Activated CD4-positive, alpha-beta T cell treated with anti-CD3 and anti-CD28 coated beads for 36 hours (primary cell): ENCODE measurements at regions of chr1 and their contacts with region 1.

Region 1: GRCh38 chr1:111507411-111508201 is 4.2 kb upstream of the ADORA3 start:
- DNase-seq: peak; percentile 77
- ATAC-seq: peak; percentile 67
- H3K4me3 Mint-ChIP-seq: peak overlapping the region; percentile 50
- H3K27ac Mint-ChIP-seq: peak overlapping the region; percentile 93
- H3K4me1 Mint-ChIP-seq: peaks cover 59% of the 10 kb centered on the region
- H3K27me3 Mint-ChIP-seq: no peaks in the 10 kb centered on the region

Region 2: DNA sequence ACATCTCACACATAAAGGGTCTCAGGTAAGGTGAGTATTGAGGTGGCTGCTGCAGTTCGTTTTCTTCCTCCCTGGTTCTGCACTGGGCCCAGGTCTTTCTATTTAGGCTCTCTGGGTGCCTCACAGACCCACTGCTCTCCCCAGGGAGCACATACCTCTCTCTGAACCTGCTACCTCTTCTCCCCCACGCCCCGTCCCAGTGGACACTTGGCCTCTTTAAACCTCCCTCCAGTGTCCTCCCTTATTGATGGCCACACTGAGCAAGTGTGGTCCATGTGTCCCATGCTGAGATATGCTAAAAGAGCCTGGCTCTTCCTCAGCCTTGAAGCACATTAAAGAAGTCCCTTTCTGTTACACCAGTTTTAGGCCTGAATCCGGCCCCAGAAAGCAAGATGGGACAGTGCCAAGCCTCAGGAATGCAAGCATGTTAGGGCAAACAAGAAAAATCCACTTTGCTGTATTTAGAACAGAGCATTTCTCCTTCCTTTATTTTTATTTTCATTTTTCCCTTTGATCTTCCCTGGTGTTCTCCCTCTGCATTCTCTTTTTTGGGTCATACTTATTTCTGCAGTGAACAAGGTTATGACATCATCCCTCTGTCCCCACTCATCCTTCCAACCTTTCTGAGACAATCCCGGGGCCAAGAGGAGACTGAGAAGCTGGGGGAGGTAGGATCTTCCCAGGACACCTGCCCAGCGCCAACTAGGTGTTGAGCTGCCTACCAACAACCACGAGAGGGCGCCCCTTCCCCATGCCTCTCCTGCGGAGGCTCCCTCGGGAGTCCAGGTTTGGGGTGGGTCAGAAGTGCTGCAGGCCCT is 285.1 kb before region 1 on chr1:
- CTCF ChIA-PET with region 1: interaction called, 3 read pairs
- POLR2A ChIA-PET with region 1: interaction called, 3 read pairs
- intact Hi-C with region 1: loop called in 1 of 2 experiments (anchors 5 kb)
- DNase-seq: peak; percentile 91
- ATAC-seq: peak; percentile 24
- H3K4me3 Mint-ChIP-seq: peak overlapping the region; percentile 62
- H3K27ac Mint-ChIP-seq: peak overlapping the region; percentile 88
- H3K4me1 Mint-ChIP-seq: peaks cover 93% of the 10 kb centered on the region
- H3K27me3 Mint-ChIP-seq: no peaks in the 10 kb centered on the region

Region 3: GRCh38 chr1:111436726-111437125 is 70.9 kb before region 1 on chr1:
- CTCF ChIA-PET with region 1: no interaction called
- POLR2A ChIA-PET with region 1: no interaction called
- intact Hi-C with region 1: no loop called
- DNase-seq: no peak
- ATAC-seq: no peak
- H3K4me3 Mint-ChIP-seq: no peak overlapping the region
- H3K27ac Mint-ChIP-seq: no peak overlapping the region
- H3K4me1 Mint-ChIP-seq: peaks cover 4% of the 10 kb centered on the region
- H3K27me3 Mint-ChIP-seq: no peaks in the 10 kb centered on the region

Region 4: DNA sequence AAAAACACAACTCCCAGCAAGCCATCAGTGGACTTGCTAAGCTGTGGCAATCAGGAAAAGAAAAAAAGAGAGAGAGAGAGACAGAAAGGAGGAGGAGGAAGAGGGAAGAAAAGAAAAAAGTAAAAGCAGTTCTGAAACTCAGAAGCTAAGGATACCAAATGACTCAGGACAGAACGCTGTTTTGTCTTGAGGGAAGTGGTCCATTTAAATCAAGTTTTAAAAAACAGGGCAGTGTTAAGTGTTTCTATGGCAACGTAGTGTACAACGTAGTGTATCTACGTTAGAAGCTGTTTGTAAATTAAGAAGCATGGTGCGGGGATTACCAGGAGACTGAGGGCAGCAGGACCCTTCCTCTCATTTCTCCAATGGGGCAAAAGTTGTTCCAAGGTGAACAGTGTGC is 10.0 kb before region 1 on chr1:
- CTCF ChIA-PET with region 1: interaction called, 72 read pairs
- POLR2A ChIA-PET with region 1: interaction called, 7 read pairs
- intact Hi-C with region 1: no loop called
- DNase-seq: no peak
- ATAC-seq: peak; percentile 52
- H3K4me3 Mint-ChIP-seq: no peak overlapping the region
- H3K27ac Mint-ChIP-seq: peak overlapping the region; percentile 66
- H3K4me1 Mint-ChIP-seq: peaks cover 34% of the 10 kb centered on the region
- H3K27me3 Mint-ChIP-seq: no peaks in the 10 kb centered on the region

Region 5: DNA sequence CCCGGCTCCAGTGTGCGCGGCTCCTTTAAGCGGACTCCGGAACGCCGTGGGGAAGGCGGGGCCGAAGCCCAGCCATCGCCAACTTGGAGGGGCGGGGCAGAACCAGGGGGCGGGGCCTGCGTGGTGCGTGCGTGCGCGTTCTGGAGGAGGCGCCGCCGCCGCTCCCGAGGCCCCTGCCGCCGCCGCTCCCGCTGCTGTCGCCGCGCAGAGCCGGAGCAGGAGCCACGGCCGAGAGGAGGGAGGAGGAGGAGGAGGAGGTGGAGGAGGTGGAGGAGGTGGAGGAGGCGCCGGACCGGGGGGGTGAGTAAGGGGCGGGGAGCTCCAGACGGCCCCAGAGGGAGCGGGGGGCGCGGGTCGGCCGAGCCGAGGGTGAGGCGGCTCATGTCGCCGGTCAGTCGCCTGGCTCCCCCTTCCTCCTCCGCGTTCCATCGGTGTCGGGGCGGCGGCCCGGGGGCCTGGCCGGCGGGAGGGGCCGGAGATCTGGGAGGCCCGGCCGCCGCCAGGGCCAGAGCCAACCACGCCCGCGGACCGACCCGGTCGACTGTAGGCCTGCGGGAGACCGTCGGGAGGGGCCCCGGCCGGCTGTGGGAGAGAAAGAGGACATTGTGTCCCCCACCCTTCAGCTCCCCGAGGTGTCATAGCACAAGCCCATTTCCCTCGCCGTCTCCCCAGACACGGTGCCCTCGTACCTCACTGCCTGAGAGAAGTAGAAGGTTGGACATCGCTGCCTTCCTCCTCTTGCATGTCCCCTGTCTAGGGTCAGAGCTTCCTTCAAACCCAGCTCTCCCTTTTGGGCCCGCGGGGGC is 112.2 kb after region 1 on chr1 and contains the start of gene RAP1A:
- CTCF ChIA-PET with region 1: interaction called, 49 read pairs
- POLR2A ChIA-PET with region 1: interaction called, 11 read pairs
- intact Hi-C with region 1: loop called in 1 of 2 experiments (anchors 1 kb)
- DNase-seq: peak; percentile 98
- ATAC-seq: peak; percentile 71
- H3K4me3 Mint-ChIP-seq: peak within 1 kb of the TSS; percentile 96
- H3K27ac Mint-ChIP-seq: peak within 1 kb of the TSS; percentile 97
- H3K4me1 Mint-ChIP-seq: peaks cover 72% of the 10 kb centered on the region
- H3K27me3 Mint-ChIP-seq: no peaks in the 10 kb centered on the region
- total RNA-seq, gene RAP1A: 182 to 214 TPM

Region 6: DNA sequence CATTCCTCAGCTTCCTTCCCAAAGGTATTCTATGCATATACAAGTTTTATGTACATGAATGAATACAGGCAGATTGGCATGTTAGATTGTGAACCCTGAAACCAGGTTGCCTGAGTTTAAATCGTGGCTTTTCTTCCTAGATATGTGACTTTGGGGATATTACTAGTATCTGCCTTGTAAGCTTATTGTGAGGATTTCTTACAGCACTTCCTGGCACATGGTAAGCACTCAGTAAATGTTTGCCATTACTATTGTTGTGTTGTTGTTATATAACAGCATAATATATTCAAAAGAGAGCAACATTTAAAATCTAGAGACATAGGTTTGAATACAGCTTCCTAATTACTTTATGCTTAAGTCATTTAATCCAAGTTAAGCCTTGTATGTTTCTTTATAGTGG is 157.0 kb after region 1 on chr1:
- CTCF ChIA-PET with region 1: interaction called, 19 read pairs
- POLR2A ChIA-PET with region 1: no interaction called
- intact Hi-C with region 1: loop called in 1 of 2 experiments (anchors 2 kb)
- DNase-seq: no peak
- ATAC-seq: peak; percentile 31
- H3K4me3 Mint-ChIP-seq: no peak overlapping the region
- H3K27ac Mint-ChIP-seq: peak overlapping the region; percentile 33
- H3K4me1 Mint-ChIP-seq: peaks cover 62% of the 10 kb centered on the region
- H3K27me3 Mint-ChIP-seq: no peaks in the 10 kb centered on the region

Region 7: GRCh38 chr1:111739194-111739924 is 231.8 kb after region 1 on chr1 and contains the start of gene INKA2:
- CTCF ChIA-PET with region 1: interaction called, 7 read pairs
- POLR2A ChIA-PET with region 1: no interaction called
- intact Hi-C with region 1: loop called in 1 of 2 experiments (anchors 2 kb)
- DNase-seq: peak; percentile 89
- ATAC-seq: peak; percentile 87
- H3K4me3 Mint-ChIP-seq: peak within 1 kb of the TSS; percentile 80
- H3K27ac Mint-ChIP-seq: peak within 1 kb of the TSS; percentile 11
- H3K4me1 Mint-ChIP-seq: peaks cover 15% of the 10 kb centered on the region
- H3K27me3 Mint-ChIP-seq: peaks cover 32% of the 10 kb centered on the region
- total RNA-seq, gene INKA2: 0.25 to 0.49 TPM